Heart right ventricle (tissue), 16 donors: ENCODE measurements at regions of chr2 and their contacts with region 1.

Region 1: DNA sequence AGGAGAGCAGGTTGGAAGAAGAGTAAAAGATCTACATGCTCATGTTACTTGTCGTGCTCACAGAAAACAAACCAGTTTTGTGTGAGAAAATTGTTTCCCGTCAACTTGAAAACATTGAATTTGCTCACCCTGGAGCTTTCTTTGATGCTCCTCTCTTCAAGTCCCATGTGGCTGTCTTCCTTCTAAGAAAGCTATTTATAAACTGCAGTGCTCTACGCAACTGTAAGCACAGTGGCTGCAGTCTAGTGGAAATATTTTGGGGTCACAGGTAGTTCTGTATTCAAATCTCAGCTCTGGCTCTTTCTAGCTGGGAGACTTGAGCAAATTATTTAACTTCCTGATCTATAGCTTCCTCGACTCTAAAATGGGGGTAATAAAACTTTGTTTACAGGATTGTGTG is 211.8 kb downstream of the PLCL1 start:
- DNase-seq: no peak
- ATAC-seq: peak in 2 of 8 donors; percentile 33 to 47
- H3K4me3 ChIP-seq: no peak overlapping the region
- H3K27ac ChIP-seq: no peak overlapping the region
- H3K4me1 ChIP-seq: peaks cover 2 to 30% (median 8%) of the 10 kb centered on the region in 9 donors
- H3K27me3 ChIP-seq: no peaks in the 10 kb centered on the region
- CTCF ChIP-seq: no peak

Region 2: DNA sequence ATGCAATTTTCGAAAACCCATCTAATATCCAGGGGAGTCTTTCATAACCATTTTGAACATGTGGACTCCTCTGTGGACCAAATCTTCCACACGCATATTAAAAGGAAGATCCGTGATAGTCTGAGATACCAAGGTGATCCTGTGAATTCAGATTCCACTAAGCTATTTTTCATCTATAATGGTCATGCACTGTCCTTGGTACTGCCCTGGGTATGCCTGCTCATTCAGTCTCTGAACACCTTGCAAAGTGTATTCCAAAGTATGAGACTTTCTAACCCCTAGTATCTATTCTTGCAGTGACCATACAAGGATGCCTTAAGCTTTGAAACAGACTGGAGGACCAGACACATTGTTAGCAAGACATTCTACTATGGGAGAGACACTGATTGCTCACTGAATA is 1594.4 kb before region 1 on chr2:
- intact Hi-C with region 1: loop called in 1 of 10 experiments (anchors 5 kb)
- DNase-seq: no peak
- ATAC-seq: no peak
- H3K4me3 ChIP-seq: no peak overlapping the region
- H3K27ac ChIP-seq: no peak overlapping the region
- H3K4me1 ChIP-seq: peaks cover 0 to 53% (median 11%) of the 10 kb centered on the region in 9 donors
- H3K27me3 ChIP-seq: no peaks in the 10 kb centered on the region
- CTCF ChIP-seq: no peak

Region 3: DNA sequence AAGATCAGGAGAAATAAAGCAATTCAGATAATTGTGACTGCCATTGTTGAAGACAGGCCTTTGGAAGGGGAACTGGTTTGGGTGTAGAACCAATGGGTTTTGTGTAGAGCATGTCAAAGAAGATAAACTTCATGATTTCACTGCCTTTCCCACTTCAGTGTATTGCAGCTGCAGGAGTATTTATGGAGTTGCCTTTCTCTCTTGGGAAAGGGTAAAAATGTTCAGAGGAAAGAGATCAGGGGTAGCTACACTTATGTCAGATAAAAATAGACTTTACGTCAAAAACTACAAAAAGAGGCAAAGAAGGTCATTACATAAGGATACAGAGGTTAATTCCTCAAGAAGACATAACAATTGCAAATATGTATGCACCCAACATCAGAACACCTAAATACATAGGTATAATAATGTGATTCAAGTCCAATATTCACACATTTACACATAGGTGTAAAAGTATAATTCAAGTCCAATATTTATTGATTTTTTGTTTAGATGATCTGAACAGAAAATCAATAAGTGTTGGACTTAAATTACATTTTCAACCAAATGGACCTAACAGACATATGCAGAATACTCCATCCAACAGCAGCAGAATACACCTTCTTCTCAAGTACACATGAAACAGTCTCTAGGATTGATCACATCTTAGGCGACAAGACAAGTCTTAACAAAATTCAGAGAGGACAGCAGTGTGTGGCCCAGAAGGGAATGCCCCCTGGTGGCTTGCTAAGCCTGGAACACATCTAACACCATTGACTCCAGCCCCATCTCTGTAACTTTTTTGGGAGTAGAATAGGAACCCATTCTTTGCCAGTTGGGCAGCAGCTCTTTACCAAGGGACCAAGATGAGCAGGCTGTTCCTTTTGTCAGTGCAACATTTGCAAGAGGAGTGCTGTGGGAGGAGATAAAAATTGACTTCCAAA is 37.8 kb after region 1 on chr2:
- intact Hi-C with region 1: no loop called
- DNase-seq: no peak
- ATAC-seq: peak; percentile 33 to 78 (median 58)
- H3K4me3 ChIP-seq: no peak overlapping the region
- H3K27ac ChIP-seq: peak overlapping the region in 8 of 10 donors; percentile 7 to 65 (median 52)
- H3K4me1 ChIP-seq: peaks cover 3 to 54% (median 21%) of the 10 kb centered on the region in 9 donors
- H3K27me3 ChIP-seq: no peaks in the 10 kb centered on the region
- CTCF ChIP-seq: peak in 8 of 9 donors; percentile 13 to 58 (median 45)